ENCODE measurements at regions of chr19 and their contacts with region 1.

Region 1: GRCh38 chr19:16324384-16325160 is at the start of gene KLF2:
- DNase-seq: peak; percentile 40 to 94 (median 62)

Region 2: DNA sequence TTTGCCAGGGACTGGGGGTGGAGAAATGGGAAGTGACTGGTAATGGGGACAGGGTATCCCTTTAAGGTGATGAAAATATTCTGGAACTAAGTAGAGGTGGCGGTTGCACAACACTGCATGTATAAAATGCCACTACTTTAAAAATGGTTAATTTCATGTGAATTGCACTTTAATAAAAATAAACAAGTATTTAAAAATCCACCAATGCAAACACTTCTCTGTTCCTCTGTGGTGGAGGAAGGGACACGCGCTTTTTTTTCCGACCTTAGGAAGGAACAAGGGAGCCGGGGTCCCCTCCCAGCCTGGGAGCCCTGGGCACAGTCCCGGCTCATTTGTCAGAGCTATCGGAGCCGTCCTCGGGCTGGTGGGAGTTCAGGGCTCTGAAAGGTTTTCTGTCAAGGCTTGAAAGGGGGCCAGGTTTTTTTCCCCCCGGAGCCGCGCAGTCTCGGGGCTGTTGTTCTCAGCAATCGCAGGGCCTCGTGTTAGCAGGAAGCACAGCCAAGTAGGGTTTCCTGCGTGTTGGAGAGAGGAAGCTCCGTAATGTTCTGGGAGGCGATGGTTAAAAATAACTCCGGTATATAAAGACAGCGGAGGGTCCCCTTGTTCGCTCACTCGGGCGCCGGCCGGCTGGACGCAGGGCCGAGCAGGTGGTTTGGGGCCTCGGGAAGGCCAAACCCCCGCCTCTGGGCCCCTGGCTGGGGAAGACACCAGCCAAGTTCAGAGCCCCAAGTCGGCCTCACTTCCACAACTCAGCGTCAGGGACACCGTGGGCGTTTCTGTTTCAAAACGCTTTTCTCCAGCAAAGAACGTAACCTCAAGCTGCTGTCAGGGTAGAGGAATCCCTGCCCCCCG is 41.1 kb before region 1 on chr19:
- intact Hi-C with region 1: loop called (anchors 5 kb)
- DNase-seq: peak; percentile 29 to 91 (median 54)

Region 3: DNA sequence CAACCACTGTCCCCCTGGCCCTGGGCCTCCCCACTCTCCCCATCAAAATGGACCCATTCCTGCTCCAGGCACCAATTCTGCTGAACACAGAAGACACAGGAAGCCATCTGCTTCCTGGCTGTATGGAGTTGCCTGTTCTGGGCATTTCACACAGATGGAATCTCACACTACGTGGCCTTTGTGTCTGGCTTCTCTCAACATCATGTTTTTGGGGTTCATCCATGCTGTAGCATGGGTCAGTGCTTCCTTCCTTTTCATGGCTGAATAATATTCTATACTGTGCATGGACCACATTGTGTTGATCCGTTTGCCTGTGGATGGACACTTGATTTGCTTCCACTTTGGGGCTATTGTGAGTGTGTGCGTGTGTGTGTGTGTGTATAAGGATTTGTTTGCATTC is 14.9 kb before region 1 on chr19:
- intact Hi-C with region 1: no loop called
- DNase-seq: no peak

Measured in posterior cingulate gyrus (tissue), 11 donors.